Activated CD4-positive, alpha-beta T cell treated with anti-CD3 and anti-CD28 coated beads, Interleukin-2, amount 10 ng/mL, durations not matched to agents 24 days and 14 days (primary cell): ENCODE measurements at regions of chr4 and their contacts with region 1.

Region 1: GRCh38 chr4:80058740-80059139 is 14.3 kb downstream of the ANTXR2 start:
- DNase-seq: peak; percentile 87
- H3K4me3 Mint-ChIP-seq: peak overlapping the region; percentile 81
- H3K27ac Mint-ChIP-seq: peak overlapping the region; percentile 97
- H3K4me1 Mint-ChIP-seq: peaks cover 36% of the 10 kb centered on the region
- H3K27me3 Mint-ChIP-seq: no peaks in the 10 kb centered on the region

Region 2: DNA sequence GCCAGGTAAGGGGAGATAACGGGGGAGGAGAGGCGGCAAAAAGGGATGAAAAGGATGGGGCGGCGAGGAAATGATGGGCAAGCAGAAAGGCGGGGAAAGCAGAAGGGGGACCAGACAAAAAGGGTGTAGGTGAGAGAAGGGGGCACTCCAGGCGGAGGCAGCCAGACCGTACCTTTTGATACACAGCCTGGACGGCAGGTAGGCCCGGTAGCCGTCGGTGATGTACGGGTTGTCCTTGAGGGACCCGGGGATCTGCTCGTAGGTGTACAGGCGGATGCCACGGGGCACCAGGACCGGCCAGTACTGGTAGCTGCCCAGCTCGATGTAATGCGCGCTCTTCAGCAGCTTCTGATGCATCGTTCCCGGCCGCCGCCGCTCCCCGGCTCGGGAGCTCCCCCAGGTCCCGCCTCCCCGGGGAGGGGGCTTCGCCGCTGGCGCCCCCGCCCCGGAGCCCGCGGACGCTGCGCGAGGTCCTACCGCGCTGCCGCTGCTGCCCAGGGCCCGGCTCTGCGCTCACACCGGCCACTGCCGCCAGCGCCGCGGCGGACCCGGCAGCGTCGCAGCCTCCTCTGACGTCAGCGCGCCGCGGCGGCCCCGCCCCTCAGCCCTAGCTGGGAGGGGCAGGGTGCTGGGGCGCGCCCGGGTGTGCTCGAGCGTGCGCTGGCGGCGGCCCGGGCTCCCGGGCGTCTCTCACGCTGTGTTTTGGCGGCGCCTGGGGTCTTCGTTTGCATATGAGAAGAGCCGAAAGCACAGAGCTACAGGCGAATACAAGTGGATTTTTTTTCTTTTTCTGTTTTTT is 1119.7 kb before region 1 on chr4 and contains the start of gene PAQR3:
- intact Hi-C with region 1: loop called (anchors 5 kb)
- DNase-seq: peak; percentile 96
- H3K4me3 Mint-ChIP-seq: peak within 1 kb of the TSS; percentile 94
- H3K27ac Mint-ChIP-seq: peak within 1 kb of the TSS; percentile 85
- H3K4me1 Mint-ChIP-seq: peaks cover 37% of the 10 kb centered on the region
- H3K27me3 Mint-ChIP-seq: peaks cover 16% of the 10 kb centered on the region
- total RNA-seq, gene PAQR3: 14.1 and 14.9 TPM in 2 replicates

Region 3: GRCh38 chr4:80007745-80008149 is 51.0 kb before region 1 on chr4:
- intact Hi-C with region 1: loop called (anchors 1 kb)
- DNase-seq: no peak
- H3K4me3 Mint-ChIP-seq: peak overlapping the region; percentile 51
- H3K27ac Mint-ChIP-seq: peak overlapping the region; percentile 85
- H3K4me1 Mint-ChIP-seq: peaks cover 53% of the 10 kb centered on the region
- H3K27me3 Mint-ChIP-seq: no peaks in the 10 kb centered on the region

Region 4: DNA sequence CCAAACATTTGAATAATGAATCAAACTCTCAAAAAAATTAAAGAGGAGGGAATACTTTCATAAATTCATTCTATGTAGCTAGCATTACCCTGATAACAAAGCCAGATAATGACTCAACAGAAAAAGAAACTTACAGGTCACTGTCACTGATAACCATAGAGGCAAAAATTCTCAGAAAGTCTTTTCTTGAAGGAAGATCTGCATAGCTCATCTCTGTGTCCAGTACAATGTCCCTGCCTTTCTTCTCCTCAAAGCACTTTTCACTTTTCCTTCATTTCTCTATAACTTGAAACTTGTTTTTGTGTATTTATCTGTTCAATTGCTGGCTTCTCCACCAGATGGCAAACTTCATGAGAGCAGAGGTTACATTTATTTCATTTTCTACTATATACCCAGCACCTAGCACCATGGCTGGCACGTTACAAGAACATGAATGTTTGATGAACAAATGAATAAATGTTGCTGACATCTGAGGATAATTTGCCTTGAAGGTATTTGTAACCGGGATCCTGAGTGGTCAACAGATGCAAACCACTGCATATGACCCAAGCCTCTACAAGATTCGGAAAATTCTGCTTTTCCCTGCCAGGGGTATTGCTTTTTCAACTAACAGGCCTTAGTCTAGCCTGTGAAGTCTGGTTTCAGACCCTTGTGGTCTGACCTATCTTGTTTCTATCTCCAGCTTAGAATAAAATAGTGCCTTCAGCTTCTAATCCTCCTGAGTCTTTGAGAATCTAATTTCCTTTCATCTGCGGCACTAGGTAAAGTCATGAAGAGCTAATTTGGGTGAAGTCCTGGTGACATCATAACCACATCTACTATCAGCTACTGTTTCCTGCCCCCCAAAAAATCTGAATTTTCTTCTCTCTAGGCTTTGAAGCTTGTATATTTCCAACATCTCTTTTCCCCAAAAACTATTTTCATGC is 66.8 kb after region 1 on chr4:
- intact Hi-C with region 1: loop called (anchors 2 kb)
- DNase-seq: peak; percentile 81
- H3K4me3 Mint-ChIP-seq: peak overlapping the region; percentile 35
- H3K27ac Mint-ChIP-seq: peak overlapping the region; percentile 77
- H3K4me1 Mint-ChIP-seq: peaks cover 51% of the 10 kb centered on the region
- H3K27me3 Mint-ChIP-seq: no peaks in the 10 kb centered on the region

Region 5: GRCh38 chr4:80173401-80173800 is 114.7 kb after region 1 on chr4:
- intact Hi-C with region 1: loop called (anchors 2 kb)
- DNase-seq: peak; percentile 89
- H3K4me3 Mint-ChIP-seq: peak overlapping the region; percentile 68
- H3K27ac Mint-ChIP-seq: peak overlapping the region; percentile 95
- H3K4me1 Mint-ChIP-seq: peaks cover 50% of the 10 kb centered on the region
- H3K27me3 Mint-ChIP-seq: no peaks in the 10 kb centered on the region